ENCODE measurements at regions of chr9 and their contacts with region 1.

Region 1: GRCh38 chr9:6739218-6739617 is 18.6 kb upstream of the KDM4C start:
- DNase-seq: no peak
- ATAC-seq: no peak
- H3K4me3 Mint-ChIP-seq: no peak overlapping the region
- H3K27ac Mint-ChIP-seq: no peak overlapping the region
- H3K4me1 Mint-ChIP-seq: peaks cover 13% of the 10 kb centered on the region
- H3K27me3 Mint-ChIP-seq: no peaks in the 10 kb centered on the region
- CTCF ChIP-seq: no peak

Region 2: GRCh38 chr9:6723881-6724420 is 15.3 kb before region 1 on chr9:
- CTCF ChIA-PET with region 1: no interaction called
- POLR2A ChIA-PET with region 1: interaction called, 3 read pairs
- intact Hi-C with region 1: loop called (anchors 2 kb)
- DNase-seq: no peak
- ATAC-seq: no peak
- H3K4me3 Mint-ChIP-seq: no peak overlapping the region
- H3K27ac Mint-ChIP-seq: peak overlapping the region; percentile 84
- H3K4me1 Mint-ChIP-seq: peaks cover 27% of the 10 kb centered on the region
- H3K27me3 Mint-ChIP-seq: no peaks in the 10 kb centered on the region
- CTCF ChIP-seq: no peak

Region 3: DNA sequence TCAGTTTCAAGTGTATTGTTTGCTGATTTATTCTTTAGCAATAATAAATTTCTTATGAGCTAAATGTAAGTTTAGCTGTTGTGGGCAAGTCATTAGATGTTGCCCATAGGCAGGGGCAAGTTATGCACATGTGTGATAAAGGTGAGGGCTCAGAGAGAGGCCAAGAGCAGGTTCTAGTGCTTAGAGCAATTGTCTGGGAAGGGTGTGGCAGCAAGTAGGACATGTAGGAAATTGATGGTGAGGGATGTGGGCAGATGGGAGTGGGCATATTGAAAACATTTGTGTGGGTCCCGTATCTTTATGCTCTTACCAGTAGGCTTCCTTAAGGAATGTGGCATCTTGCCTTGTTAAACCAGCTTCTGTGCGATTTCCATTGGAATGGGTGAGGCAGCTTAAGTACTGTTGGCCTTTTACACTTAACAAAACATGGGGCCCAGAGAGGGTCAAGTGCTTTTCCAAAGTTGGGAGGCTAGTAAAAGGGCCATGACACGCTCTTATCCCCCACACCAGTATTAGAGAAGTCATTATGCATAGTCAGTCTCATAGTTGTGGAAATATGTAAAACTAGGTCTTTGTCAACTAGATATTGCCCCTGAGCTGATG is 79.2 kb after region 1 on chr9:
- CTCF ChIA-PET with region 1: no interaction called
- POLR2A ChIA-PET with region 1: no interaction called
- intact Hi-C with region 1: no loop called
- DNase-seq: no peak
- ATAC-seq: no peak
- H3K4me3 Mint-ChIP-seq: no peak overlapping the region
- H3K27ac Mint-ChIP-seq: peak overlapping the region; percentile 39
- H3K4me1 Mint-ChIP-seq: peaks cover 49% of the 10 kb centered on the region
- H3K27me3 Mint-ChIP-seq: no peaks in the 10 kb centered on the region
- CTCF ChIP-seq: no peak

Measured in activated B cell treated with CpG ODN at 0.5 μM for 24 hours (primary cell).